Transverse colon (tissue), 4 donors: ENCODE measurements at regions of chr15 and their contacts with region 1.

Region 1: DNA sequence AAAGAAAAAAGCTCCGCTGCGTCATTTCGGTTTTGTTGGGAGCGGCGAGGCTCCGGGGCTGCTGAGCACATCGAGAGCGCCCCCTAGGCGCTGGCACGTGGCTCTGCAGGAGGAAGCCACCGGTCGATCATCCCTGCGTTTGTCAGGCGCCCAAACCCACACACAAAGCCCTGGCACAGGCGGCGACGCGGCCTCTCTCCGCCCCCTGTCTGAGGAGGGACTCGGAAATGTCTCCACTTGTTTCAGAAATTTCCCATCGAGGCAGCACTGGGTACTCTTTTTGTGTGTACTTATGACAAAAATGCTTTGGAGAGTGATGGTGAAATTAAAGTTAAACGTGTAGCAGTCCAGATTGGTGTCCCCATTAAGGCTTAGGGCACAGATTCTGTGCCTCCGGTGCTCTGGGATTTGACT is 407.3 kb upstream of the ONECUT1 start:
- DNase-seq: peak; percentile 58
- H3K4me3 ChIP-seq: no peak overlapping the region
- H3K27ac ChIP-seq: no peak overlapping the region
- H3K4me1 ChIP-seq: peaks cover 0 to 5% (median 0%) of the 10 kb centered on the region in 4 donors
- H3K27me3 ChIP-seq: peaks cover 15% of the 10 kb centered on the region
- CTCF ChIP-seq: peak; percentile 74 to 86 (median 80)
- EP300 ChIP-seq: no peak
- POLR2A ChIP-seq: no peak

Region 2: DNA sequence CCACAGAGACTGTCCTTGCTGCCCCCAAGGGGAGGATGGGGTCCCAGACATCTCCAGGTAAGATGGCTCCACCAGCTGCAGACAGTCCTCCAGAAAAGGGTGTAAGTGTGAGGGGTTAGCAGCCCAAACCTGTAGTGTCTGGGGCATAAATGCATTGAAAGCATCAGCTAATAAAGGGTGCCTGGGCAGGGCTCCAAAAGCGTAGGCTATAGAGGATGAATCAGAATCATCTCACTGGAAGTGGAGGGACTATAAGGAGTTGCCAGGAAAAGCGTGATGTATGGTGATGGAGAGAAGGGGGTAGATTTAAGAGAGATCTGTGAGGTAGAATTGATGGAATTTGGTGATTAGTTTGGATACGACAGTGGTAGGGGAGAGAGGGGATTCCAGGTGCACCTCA is 327.4 kb before region 1 on chr15:
- in situ Hi-C with region 1: no loop called
- intact Hi-C with region 1: no loop called
- DNase-seq: no peak
- H3K4me3 ChIP-seq: no peak overlapping the region
- H3K27ac ChIP-seq: no peak overlapping the region
- H3K4me1 ChIP-seq: no peaks in the 10 kb centered on the region
- H3K27me3 ChIP-seq: no peaks in the 10 kb centered on the region
- CTCF ChIP-seq: no peak
- EP300 ChIP-seq: no peak
- POLR2A ChIP-seq: no peak

Region 3: GRCh38 chr15:53171559-53171958 is 25.9 kb before region 1 on chr15:
- in situ Hi-C with region 1: no loop called
- intact Hi-C with region 1: loop called (anchors 2 kb)
- DNase-seq: no peak
- H3K4me3 ChIP-seq: no peak overlapping the region
- H3K27ac ChIP-seq: no peak overlapping the region
- H3K4me1 ChIP-seq: no peaks in the 10 kb centered on the region
- H3K27me3 ChIP-seq: no peaks in the 10 kb centered on the region
- CTCF ChIP-seq: no peak
- EP300 ChIP-seq: no peak
- POLR2A ChIP-seq: no peak